ENCODE measurements at regions of chrX and their contacts with region 1.

Region 1: GRCh38 chrX:48794911-48795501 is 6.9 kb upstream of the HDAC6 start:
- DNase-seq: peak; percentile 21
- H3K4me3 ChIP-seq: no peak overlapping the region
- H3K27ac ChIP-seq: no peak overlapping the region
- H3K4me1 ChIP-seq: peaks cover 7% of the 10 kb centered on the region
- H3K27me3 ChIP-seq: no peaks in the 10 kb centered on the region
- CTCF ChIP-seq: no peak

Region 2: GRCh38 chrX:48720577-48721250 is 74.3 kb before region 1 on chrX:
- CTCF ChIA-PET with region 1: no interaction called
- dilution Hi-C with region 1: no loop called
- in situ Hi-C with region 1: no loop called
- intact Hi-C with region 1: no loop called
- DNase-seq: no peak
- H3K4me3 ChIP-seq: no peak overlapping the region
- H3K27ac ChIP-seq: no peak overlapping the region
- H3K4me1 ChIP-seq: peaks cover 1% of the 10 kb centered on the region
- H3K27me3 ChIP-seq: no peaks in the 10 kb centered on the region
- CTCF ChIP-seq: no peak

Region 3: GRCh38 chrX:48747415-48748016 is 47.5 kb before region 1 on chrX:
- CTCF ChIA-PET with region 1: no interaction called
- dilution Hi-C with region 1: no loop called
- in situ Hi-C with region 1: no loop called
- intact Hi-C with region 1: no loop called
- DNase-seq: no peak
- H3K4me3 ChIP-seq: no peak overlapping the region
- H3K27ac ChIP-seq: no peak overlapping the region
- H3K4me1 ChIP-seq: no peaks in the 10 kb centered on the region
- H3K27me3 ChIP-seq: no peaks in the 10 kb centered on the region
- CTCF ChIP-seq: no peak

Region 4: DNA sequence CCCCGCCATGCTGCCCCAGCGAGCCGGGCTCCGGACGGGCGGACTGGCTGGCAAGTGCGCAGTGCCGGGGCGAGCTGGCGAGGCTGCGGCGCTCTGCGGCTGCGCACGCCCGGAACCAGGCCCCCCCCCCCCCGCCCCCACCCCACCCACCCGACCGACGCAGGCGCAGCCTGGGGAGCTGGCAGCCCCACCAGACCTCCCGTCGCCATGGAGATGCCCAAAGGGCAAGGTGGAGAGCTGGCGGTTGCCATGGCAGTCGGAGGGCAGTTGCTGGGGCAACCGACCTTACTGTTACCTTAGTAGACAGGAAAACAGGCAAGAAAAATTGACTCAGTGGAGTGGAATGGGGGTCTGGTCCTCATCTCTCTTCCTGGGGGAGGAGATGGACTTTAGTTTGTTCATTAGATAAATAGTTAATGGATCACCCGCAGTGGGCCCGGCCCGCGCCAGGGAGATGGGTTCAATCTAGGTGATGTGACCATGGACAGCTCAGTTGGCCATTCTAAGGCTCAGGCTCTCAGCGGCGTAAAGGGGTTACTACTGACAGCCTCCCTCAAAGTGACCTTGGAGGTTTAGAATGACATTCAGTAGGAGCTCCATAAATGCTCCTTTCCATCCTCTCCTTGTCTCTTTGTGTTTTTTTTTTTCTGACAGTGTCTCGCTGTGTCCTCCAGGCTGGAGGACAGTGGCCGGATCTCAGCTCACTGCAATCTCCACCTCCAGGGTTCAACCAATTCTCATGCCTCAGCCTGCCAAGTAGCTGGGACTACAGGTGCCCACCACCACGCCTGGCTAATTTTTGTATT is 40.7 kb after region 1 on chrX and contains the start of gene PCSK1N:
- CTCF ChIA-PET with region 1: no interaction called
- dilution Hi-C with region 1: loop called (anchors 5 kb)
- in situ Hi-C with region 1: no loop called
- intact Hi-C with region 1: no loop called
- DNase-seq: peak; percentile 28
- H3K4me3 ChIP-seq: peak within 1 kb of the TSS; percentile 2 to 55 (median 47)
- H3K27ac ChIP-seq: no peak within 1 kb of the TSS
- H3K4me1 ChIP-seq: peaks cover 7% of the 10 kb centered on the region
- H3K27me3 ChIP-seq: no peaks in the 10 kb centered on the region
- CTCF ChIP-seq: no peak
- total RNA-seq, gene PCSK1N: 16.5 to 36.4 TPM

Region 5: GRCh38 chrX:48908591-48908990 is 113.6 kb after region 1 on chrX:
- CTCF ChIA-PET with region 1: no interaction called
- dilution Hi-C with region 1: no loop called
- in situ Hi-C with region 1: no loop called
- intact Hi-C with region 1: no loop called
- DNase-seq: no peak
- H3K4me3 ChIP-seq: no peak overlapping the region
- H3K27ac ChIP-seq: no peak overlapping the region
- H3K4me1 ChIP-seq: no peaks in the 10 kb centered on the region
- H3K27me3 ChIP-seq: no peaks in the 10 kb centered on the region
- CTCF ChIP-seq: no peak